A673 (cell line): ENCODE measurements at regions of chr2 and their contacts with region 1.

Region 1: GRCh38 chr2:112584134-112584890 is at the start of gene CHCHD5:
- DNase-seq: peak; percentile 98
- H3K4me3 ChIP-seq: peak within 1 kb of the TSS; percentile 59
- H3K27ac ChIP-seq: peak within 1 kb of the TSS; percentile 94
- H3K4me1 ChIP-seq: peaks cover 18% of the 10 kb centered on the region
- H3K27me3 ChIP-seq: no peaks in the 10 kb centered on the region
- CTCF ChIP-seq: peak; percentile 38
- total RNA-seq, gene CHCHD5: 37.1 and 41.4 TPM in 2 replicates

Region 2: GRCh38 chr2:112108178-112108832 is 476.0 kb before region 1 on chr2:
- CTCF ChIA-PET with region 1: no interaction called
- POLR2A ChIA-PET with region 1: no interaction called
- intact Hi-C with region 1: loop called (anchors 5 kb)
- DNase-seq: no peak
- H3K4me3 ChIP-seq: no peak overlapping the region
- H3K27ac ChIP-seq: no peak overlapping the region
- H3K4me1 ChIP-seq: no peaks in the 10 kb centered on the region
- H3K27me3 ChIP-seq: no peaks in the 10 kb centered on the region
- CTCF ChIP-seq: no peak

Region 3: DNA sequence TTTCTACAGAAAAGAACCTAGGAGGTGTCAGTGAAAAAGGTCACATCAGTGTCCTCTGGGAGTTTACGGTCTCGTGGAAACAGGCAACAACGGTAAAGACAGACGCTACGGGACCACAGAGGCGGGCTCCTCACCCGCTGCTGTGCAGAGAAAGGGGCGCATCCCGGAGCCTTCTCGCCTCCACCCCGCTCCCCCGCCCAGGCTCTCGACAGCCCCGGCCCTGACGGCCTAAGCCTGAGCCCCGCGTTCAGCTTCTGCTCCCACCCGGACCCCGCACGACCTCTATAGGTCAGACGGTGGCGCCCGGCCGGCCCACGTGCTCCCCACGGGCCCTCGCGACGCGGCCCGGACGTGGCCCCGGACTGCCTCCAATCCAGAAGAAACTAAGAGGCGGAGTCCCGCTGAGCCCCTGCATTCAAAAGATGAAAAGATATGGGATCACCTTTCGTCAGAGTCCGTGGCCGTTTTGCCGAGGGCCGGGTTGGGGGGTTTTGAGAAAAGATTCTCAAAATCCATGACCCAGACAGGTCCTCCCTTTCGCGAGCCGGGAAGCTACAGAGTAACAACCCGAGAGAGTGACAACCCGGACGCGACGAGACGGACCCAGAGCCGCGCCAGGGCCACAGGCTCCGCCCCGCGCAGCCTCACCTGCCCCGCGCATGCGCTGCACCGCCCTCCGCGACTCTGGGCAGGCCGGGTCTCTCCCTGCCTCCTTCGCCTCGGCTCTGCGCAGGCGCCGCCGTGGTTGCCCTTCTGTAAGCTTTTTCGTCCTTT is 329.7 kb before region 1 on chr2 and contains the start of gene ZC3H8:
- CTCF ChIA-PET with region 1: no interaction called
- POLR2A ChIA-PET with region 1: no interaction called
- intact Hi-C with region 1: loop called (anchors 5 kb)
- DNase-seq: peak; percentile 96
- H3K4me3 ChIP-seq: peak within 1 kb of the TSS; percentile 68
- H3K27ac ChIP-seq: peak within 1 kb of the TSS; percentile 59
- H3K4me1 ChIP-seq: peaks cover 9% of the 10 kb centered on the region
- H3K27me3 ChIP-seq: no peaks in the 10 kb centered on the region
- CTCF ChIP-seq: no peak
- total RNA-seq, gene ZC3H8: 19.7 and 23.2 TPM in 2 replicates

Region 4: DNA sequence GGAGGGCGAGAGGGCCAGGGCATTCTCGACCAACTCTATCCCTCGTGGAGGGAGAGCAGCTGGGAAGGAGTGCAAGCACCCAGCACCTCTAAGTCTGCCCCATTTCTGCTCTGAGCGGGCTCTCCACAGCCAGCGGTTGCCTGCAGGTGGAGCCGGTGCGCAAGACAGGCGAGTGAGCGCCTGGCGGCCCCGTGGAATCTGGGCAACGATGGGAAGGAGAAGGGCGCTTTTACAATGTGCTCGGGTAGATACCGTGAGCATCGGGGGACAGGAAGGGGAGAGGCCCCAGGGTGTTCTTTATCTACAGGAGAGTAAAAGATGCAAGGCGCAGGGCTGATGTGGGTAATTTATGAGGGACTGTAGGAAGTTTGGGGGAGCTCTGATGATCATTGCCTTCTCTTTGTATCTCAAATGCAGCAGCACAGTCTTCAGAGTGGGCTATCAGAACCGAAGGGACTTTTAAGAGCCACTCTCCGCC is 103.2 kb before region 1 on chr2:
- CTCF ChIA-PET with region 1: interaction called, 4 read pairs
- POLR2A ChIA-PET with region 1: no interaction called
- intact Hi-C with region 1: loop called (anchors 1 kb)
- DNase-seq: peak; percentile 94
- H3K4me3 ChIP-seq: peak overlapping the region; percentile 92
- H3K27ac ChIP-seq: peak overlapping the region; percentile 76
- H3K4me1 ChIP-seq: peaks cover 8% of the 10 kb centered on the region
- H3K27me3 ChIP-seq: no peaks in the 10 kb centered on the region
- CTCF ChIP-seq: peak; percentile 96

Region 5: DNA sequence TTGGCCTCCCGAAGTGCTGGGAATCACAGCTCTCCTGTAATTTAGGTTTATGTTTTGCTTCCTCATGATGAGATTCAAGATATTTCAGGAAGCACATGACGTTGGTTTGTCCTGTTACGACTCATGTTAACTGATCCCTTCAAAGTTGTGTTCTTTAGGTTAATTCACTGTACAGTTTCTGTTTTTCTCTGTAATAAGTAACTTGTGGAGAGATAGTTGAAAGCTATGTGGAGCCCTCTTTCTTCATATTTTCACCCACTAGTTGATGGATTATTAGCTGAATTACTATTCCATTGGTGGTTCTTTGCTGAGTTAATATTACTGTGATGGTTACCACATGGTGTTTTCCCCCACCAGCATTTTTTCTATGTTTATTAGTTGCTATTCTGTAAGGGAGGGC is 18.2 kb before region 1 on chr2:
- CTCF ChIA-PET with region 1: no interaction called
- POLR2A ChIA-PET with region 1: no interaction called
- intact Hi-C with region 1: no loop called
- DNase-seq: no peak
- H3K4me3 ChIP-seq: no peak overlapping the region
- H3K27ac ChIP-seq: no peak overlapping the region
- H3K4me1 ChIP-seq: no peaks in the 10 kb centered on the region
- H3K27me3 ChIP-seq: no peaks in the 10 kb centered on the region
- CTCF ChIP-seq: no peak

Region 6: DNA sequence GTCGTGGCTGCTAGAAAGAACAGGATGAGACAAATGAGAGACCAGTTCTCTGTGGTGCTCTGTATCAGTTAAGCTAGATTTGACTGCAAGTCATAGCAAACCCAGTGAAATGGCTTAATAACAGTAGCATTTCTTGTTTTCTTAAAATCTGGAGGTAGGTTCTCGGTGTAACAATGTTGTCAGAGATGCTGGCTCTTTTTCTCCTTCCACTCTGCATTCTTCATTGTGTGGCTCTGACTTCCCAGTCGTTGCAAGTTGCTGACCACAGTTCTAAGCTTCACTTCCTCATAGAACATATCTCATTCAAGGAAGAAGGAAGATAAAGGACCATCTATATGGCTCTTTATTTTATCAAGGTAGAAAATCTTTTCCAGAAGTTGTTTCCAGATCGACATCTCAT is 188.0 kb after region 1 on chr2:
- CTCF ChIA-PET with region 1: no interaction called
- POLR2A ChIA-PET with region 1: no interaction called
- intact Hi-C with region 1: no loop called
- DNase-seq: no peak
- H3K4me3 ChIP-seq: no peak overlapping the region
- H3K27ac ChIP-seq: no peak overlapping the region
- H3K4me1 ChIP-seq: no peaks in the 10 kb centered on the region
- H3K27me3 ChIP-seq: no peaks in the 10 kb centered on the region
- CTCF ChIP-seq: no peak

Region 7: GRCh38 chr2:112803691-112804521 is 219.6 kb after region 1 on chr2:
- CTCF ChIA-PET with region 1: no interaction called
- POLR2A ChIA-PET with region 1: no interaction called
- intact Hi-C with region 1: no loop called
- DNase-seq: no peak
- H3K4me3 ChIP-seq: no peak overlapping the region
- H3K27ac ChIP-seq: no peak overlapping the region
- H3K4me1 ChIP-seq: no peaks in the 10 kb centered on the region
- H3K27me3 ChIP-seq: no peaks in the 10 kb centered on the region
- CTCF ChIP-seq: no peak

Region 8: DNA sequence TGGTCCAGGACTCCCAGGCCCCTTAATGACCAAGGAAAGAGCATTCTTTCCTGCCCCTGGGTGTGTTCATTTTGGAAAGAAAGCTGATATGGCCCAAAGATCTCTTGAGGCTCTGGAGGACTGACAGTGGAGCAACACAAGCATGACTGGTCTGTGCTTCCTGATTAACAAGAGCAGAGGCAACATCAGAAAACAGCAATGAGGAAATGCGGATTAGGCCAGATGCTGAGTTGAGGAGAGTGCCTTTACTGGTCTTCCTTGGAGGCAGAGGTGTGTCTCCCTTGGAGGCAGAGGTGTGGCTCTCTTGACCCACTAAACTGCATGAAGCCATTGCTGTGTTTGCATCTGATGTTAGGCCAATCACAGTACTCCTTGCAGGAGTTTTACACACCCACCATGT is 448.4 kb after region 1 on chr2:
- CTCF ChIA-PET with region 1: no interaction called
- POLR2A ChIA-PET with region 1: no interaction called
- intact Hi-C with region 1: no loop called
- DNase-seq: no peak
- H3K4me3 ChIP-seq: no peak overlapping the region
- H3K27ac ChIP-seq: no peak overlapping the region
- H3K4me1 ChIP-seq: no peaks in the 10 kb centered on the region
- H3K27me3 ChIP-seq: peaks cover 39% of the 10 kb centered on the region
- CTCF ChIP-seq: no peak